Body of pancreas (tissue), 4 donors: ENCODE measurements at regions of chr20 and their contacts with region 1.

Region 1: DNA sequence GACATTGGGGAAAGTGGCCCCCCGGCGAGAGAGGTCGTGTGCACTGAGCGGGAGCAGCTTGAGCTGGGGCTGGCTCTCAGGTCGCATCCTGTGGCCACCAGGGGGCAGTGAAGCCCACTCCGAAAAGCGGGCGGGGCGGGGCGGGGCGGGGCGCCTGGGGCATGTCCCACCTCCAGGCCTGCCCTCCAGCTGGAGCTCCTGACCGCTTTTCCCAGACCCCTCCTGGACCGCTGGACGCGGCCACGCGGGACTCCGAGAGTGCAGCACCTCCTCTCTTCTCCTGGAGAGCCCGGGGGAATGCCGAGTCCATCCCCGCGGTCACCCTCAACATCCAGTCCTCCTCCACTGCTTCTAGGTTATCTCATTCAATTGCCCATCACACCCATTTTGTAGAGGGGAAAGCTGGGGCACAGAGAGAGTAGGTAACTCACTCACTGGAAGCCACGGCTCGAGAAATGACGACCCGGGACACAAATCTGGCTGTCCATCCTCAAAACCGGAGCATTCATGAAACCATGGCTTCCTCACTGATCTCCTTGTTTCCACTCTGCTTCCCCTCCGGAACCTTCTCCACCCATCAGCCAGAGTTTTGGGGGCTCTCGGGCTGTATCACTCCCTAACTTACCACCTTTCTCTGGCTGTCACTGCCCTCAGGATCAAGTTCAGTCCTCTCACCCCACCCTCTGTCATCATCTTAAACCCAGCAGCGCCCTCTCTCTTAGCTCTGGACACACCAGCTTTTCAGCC is 24.1 kb downstream of the COX4I2 start:
- DNase-seq: peak; percentile 83 to 88 (median 86)
- ATAC-seq: peak; percentile 94
- H3K4me3 ChIP-seq: no peak overlapping the region
- H3K27ac ChIP-seq: peak overlapping the region; percentile 55 to 58 (median 58)
- H3K4me1 ChIP-seq: peaks cover 43% of the 10 kb centered on the region
- H3K27me3 ChIP-seq: no peaks in the 10 kb centered on the region
- CTCF ChIP-seq: peak; percentile 66 to 85 (median 71)
- POLR2A ChIP-seq: peak in 2 of 3 donors; percentile 44 to 49

Region 2: GRCh38 chr20:31723319-31724078 is 61.7 kb after region 1 on chr20:
- intact Hi-C with region 1: loop called (anchors 5 kb)
- DNase-seq: peak; percentile 96 to 97 (median 97)
- ATAC-seq: peak; percentile 92
- H3K4me3 ChIP-seq: peak overlapping the region; percentile 46 to 71
- H3K27ac ChIP-seq: peak overlapping the region; percentile 94 to 98 (median 96)
- H3K4me1 ChIP-seq: peaks cover 37% of the 10 kb centered on the region
- H3K27me3 ChIP-seq: no peaks in the 10 kb centered on the region
- CTCF ChIP-seq: peak; percentile 86 to 99 (median 99)
- POLR2A ChIP-seq: peak; percentile 28 to 59 (median 49)

Region 3: GRCh38 chr20:31781945-31782344 is 120.1 kb after region 1 on chr20:
- intact Hi-C with region 1: no loop called
- DNase-seq: no peak
- ATAC-seq: no peak
- H3K4me3 ChIP-seq: no peak overlapping the region
- H3K27ac ChIP-seq: no peak overlapping the region
- H3K4me1 ChIP-seq: no peaks in the 10 kb centered on the region
- H3K27me3 ChIP-seq: no peaks in the 10 kb centered on the region
- CTCF ChIP-seq: no peak
- POLR2A ChIP-seq: no peak